ENCODE measurements at regions of chr1 and their contacts with region 1.

Region 1: GRCh38 chr1:26965640-26966039 is 5.4 kb upstream of the KDF1 start:
- DNase-seq: no peak
- H3K4me3 ChIP-seq: no peak overlapping the region
- H3K4me3 Mint-ChIP-seq: no peak overlapping the region
- H3K27ac Mint-ChIP-seq: no peak overlapping the region
- H3K4me1 ChIP-seq: 0 out of 2 replicates have a peak, but pooled peaks cover 2% of the 10 kb centered on the region
- H3K4me1 Mint-ChIP-seq: peaks cover 6% of the 10 kb centered on the region
- H3K27me3 ChIP-seq: no peaks in the 10 kb centered on the region
- H3K27me3 Mint-ChIP-seq: no peaks in the 10 kb centered on the region
- CTCF ChIP-seq: no peak

Region 2: DNA sequence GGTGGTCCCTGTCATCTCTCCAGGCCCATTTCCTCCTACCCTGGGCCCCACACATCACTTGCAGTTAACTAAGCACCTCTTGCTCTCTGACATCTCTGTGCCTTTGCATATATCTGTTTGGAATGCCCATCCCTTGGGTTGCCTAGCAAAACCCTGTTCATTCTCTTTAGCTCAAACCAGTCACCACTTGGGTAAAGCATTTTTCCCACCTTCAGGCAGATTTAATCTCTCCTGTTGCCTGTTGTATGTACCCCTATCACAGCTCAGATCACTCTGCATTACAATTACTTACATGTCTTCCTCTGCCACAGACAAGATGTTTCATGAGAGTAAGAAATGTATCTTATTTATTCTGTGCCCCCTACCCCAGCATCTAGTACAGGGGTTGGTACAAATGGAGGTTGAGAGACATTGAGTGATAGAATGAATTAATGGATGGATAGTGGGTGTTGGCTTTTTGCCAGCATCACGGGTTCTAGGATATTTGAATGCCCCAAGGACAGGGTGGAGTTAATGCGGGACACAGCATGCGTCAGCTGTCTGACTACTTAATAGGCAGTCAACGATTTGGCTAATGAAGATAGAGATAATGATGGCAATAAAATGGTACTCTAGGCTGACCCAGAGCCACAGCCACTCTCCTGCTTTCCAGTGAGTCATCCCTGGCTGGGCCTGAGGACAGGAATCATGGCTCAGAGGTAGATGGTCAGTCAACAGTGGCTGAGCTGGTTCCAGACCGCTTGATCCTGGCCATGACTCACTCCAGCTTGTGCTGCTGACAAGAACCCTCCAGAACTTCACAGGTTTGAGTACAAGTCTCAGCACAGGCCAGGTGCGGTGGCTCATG is 58.3 kb before region 1 on chr1:
- CTCF ChIA-PET with region 1: no interaction called
- POLR2A ChIA-PET with region 1: no interaction called
- intact Hi-C with region 1: no loop called
- DNase-seq: peak; percentile 21 to 54
- H3K4me3 ChIP-seq: no peak overlapping the region
- H3K4me3 Mint-ChIP-seq: no peak overlapping the region
- H3K27ac Mint-ChIP-seq: no peak overlapping the region
- H3K4me1 ChIP-seq: peaks cover 11% of the 10 kb centered on the region; the same call in 1 of the 2 replicates
- H3K4me1 Mint-ChIP-seq: peaks cover 15% of the 10 kb centered on the region
- H3K27me3 ChIP-seq: no peaks in the 10 kb centered on the region
- H3K27me3 Mint-ChIP-seq: no peaks in the 10 kb centered on the region
- CTCF ChIP-seq: no peak

Region 3: DNA sequence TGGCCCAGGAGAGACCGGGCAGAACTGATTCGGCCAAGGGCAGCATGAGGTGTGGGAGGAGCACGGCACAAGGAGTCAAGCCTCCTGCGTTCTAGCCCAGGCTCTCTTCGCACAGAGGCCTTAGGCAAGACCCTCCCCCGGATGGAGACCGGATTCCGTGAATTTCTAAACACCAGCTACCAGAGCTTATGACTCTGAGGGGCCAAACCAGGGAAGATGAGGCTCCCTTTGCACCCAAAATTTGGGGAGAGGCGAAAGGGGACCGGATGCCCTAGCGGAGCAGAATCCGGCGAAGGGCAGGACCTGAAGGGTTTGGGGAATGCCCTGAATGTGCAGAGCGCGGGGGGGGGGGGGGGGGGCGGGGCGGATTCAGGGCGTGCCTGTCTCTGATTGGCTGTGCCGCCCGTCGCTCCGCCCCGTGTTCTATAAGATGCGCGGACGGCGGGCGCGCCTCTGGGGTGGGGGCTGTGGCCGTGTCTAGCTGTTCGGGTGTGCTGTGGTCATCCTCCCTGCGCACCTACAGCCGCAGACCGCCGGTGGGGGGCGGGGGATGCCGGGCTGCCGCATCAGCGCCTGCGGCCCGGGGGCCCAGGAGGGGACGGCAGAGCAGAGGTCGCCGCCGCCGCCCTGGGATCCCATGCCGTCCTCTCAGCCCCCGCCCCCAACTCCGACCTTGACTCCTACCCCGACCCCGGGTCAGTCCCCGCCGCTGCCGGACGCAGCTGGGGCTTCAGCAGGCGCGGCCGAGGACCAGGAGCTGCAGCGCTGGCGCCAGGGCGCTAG is 27.8 kb after region 1 on chr1 and contains the start of gene TRNP1:
- CTCF ChIA-PET with region 1: interaction called, 11 read pairs
- POLR2A ChIA-PET with region 1: no interaction called
- intact Hi-C with region 1: loop called (anchors 2 kb)
- DNase-seq: peak; percentile 91
- H3K4me3 ChIP-seq: peak within 1 kb of the TSS; percentile 83
- H3K4me3 Mint-ChIP-seq: peak within 1 kb of the TSS; percentile 76
- H3K27ac Mint-ChIP-seq: peak within 1 kb of the TSS; percentile 87
- H3K4me1 ChIP-seq: peaks cover 56% of the 10 kb centered on the region
- H3K4me1 Mint-ChIP-seq: peaks cover 17% of the 10 kb centered on the region
- H3K27me3 ChIP-seq: no peaks in the 10 kb centered on the region
- H3K27me3 Mint-ChIP-seq: no peaks in the 10 kb centered on the region
- CTCF ChIP-seq: no peak
- total RNA-seq, gene TRNP1: 23.3 and 23.6 TPM in 2 replicates

Region 4: GRCh38 chr1:27097484-27097917 is 131.9 kb after region 1 on chr1:
- CTCF ChIA-PET with region 1: interaction called, 3 read pairs
- POLR2A ChIA-PET with region 1: no interaction called
- intact Hi-C with region 1: loop called (anchors 2 kb)
- DNase-seq: peak; percentile 63 to 83
- H3K4me3 ChIP-seq: no peak overlapping the region
- H3K4me3 Mint-ChIP-seq: no peak overlapping the region
- H3K27ac Mint-ChIP-seq: no peak overlapping the region
- H3K4me1 ChIP-seq: peaks cover 14% of the 10 kb centered on the region
- H3K4me1 Mint-ChIP-seq: peaks cover 13% of the 10 kb centered on the region
- H3K27me3 ChIP-seq: no peaks in the 10 kb centered on the region
- H3K27me3 Mint-ChIP-seq: no peaks in the 10 kb centered on the region
- CTCF ChIP-seq: peak; percentile 84 to 86

Measured in Caco-2 (cell line).